Activated CD4-positive, alpha-beta memory T cell treated with anti-CD3 and anti-CD28 coated beads for 36 hours (primary cell): ENCODE measurements at regions of chr14 and their contacts with region 1.

Region 1: GRCh38 chr14:88492272-88493089 is 62.3 kb downstream of the PTPN21 start:
- DNase-seq: peak; percentile 58
- H3K4me3 Mint-ChIP-seq: no peak overlapping the region
- H3K27ac Mint-ChIP-seq: no peak overlapping the region
- H3K4me1 Mint-ChIP-seq: peaks cover 2% of the 10 kb centered on the region
- H3K27me3 Mint-ChIP-seq: peaks cover 4% of the 10 kb centered on the region

Region 2: DNA sequence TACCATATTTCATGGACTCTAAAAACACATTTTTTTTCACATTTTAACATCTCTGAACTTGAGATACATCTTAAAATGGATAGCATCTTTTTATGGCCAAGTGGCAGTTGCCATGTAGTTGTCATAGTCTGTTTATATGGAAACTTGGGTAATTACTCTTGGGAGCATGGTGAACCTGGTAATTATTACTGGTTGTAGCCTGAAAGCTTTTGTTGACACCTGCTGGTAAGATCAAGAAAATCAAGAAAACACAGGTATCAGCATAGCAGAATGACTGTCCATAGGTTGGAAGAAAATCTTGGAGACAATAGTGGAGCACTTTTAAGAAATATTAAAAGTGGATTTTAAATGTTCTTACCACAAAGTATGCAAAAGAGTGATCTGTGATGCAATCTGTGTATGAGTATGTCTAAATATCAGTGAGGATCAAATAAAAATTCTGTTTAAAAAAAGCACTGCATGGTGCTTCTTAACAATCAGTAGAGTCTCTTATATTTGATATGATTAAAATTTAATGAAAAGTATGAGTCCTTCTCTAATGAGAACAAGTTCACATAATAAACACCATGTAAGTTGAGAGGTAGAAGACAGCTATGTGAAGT is 376.2 kb after region 1 on chr14:
- CTCF ChIA-PET with region 1: no interaction called
- POLR2A ChIA-PET with region 1: no interaction called
- intact Hi-C with region 1: loop called (anchors 2 kb)
- DNase-seq: no peak
- H3K4me3 Mint-ChIP-seq: no peak overlapping the region
- H3K27ac Mint-ChIP-seq: no peak overlapping the region
- H3K4me1 Mint-ChIP-seq: no peaks in the 10 kb centered on the region
- H3K27me3 Mint-ChIP-seq: no peaks in the 10 kb centered on the region